ENCODE measurements at regions of chr1 and their contacts with region 1.

Region 1: GRCh38 chr1:1122078-1122811 is 6.4 kb upstream of the C1orf159 start:
- DNase-seq: peak in 1 of 2 experiments; percentile 73
- H3K4me3 ChIP-seq: no peak overlapping the region
- H3K4me3 Mint-ChIP-seq: no peak overlapping the region
- H3K27ac Mint-ChIP-seq: no peak overlapping the region
- H3K4me1 ChIP-seq: peaks cover 41% of the 10 kb centered on the region
- H3K4me1 Mint-ChIP-seq: peaks cover 16% of the 10 kb centered on the region
- H3K27me3 ChIP-seq: no peaks in the 10 kb centered on the region
- H3K27me3 Mint-ChIP-seq: no peaks in the 10 kb centered on the region
- CTCF ChIP-seq: peak; percentile 59 to 70

Region 2: DNA sequence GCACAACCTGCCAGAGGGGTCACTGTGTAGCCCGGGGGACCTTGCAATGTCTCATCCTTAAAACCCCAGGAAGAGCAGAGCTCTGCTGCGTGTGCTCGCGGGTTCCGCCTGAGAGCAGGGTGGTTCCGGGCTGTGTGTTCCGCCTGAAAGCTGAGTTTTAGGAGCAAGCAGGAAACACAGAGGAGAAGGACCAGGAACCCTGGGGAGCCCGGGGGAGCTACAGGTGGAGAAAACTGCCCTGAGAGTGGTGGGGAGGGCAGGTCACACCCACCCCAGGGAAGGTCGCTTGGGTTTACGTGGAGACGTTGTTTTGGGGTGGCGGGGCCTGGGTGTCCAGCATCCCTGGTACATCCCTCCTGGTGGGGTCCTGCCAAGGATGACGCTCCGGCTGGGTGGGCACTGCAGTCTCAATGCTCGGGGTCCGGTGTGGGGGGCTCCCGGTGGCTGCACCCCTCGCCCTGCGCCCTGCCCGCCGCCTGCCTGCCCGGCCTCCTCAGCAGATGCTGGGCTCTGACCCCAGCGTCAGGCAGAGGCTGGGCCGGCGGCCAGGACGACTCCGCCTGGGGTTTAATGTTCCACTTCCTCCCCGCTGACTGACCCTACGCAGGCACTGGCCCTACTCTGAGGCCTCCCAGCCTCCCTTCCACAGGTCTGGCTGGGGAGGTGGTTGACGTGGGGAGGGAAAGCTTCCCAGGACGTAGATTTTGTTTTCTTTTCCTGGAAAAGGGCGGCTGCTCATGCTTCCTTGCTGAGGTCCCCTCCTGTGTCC is 10.9 kb after region 1 on chr1:
- CTCF ChIA-PET with region 1: no interaction called
- POLR2A ChIA-PET with region 1: interaction called, 7 read pairs
- intact Hi-C with region 1: loop called (anchors 1 kb)
- DNase-seq: no peak
- H3K4me3 ChIP-seq: no peak overlapping the region
- H3K4me3 Mint-ChIP-seq: peak overlapping the region; percentile 27
- H3K27ac Mint-ChIP-seq: peak overlapping the region; percentile 34
- H3K4me1 ChIP-seq: peaks cover 16% of the 10 kb centered on the region
- H3K4me1 Mint-ChIP-seq: no peaks in the 10 kb centered on the region
- H3K27me3 ChIP-seq: no peaks in the 10 kb centered on the region
- H3K27me3 Mint-ChIP-seq: no peaks in the 10 kb centered on the region
- CTCF ChIP-seq: no peak

Region 3: DNA sequence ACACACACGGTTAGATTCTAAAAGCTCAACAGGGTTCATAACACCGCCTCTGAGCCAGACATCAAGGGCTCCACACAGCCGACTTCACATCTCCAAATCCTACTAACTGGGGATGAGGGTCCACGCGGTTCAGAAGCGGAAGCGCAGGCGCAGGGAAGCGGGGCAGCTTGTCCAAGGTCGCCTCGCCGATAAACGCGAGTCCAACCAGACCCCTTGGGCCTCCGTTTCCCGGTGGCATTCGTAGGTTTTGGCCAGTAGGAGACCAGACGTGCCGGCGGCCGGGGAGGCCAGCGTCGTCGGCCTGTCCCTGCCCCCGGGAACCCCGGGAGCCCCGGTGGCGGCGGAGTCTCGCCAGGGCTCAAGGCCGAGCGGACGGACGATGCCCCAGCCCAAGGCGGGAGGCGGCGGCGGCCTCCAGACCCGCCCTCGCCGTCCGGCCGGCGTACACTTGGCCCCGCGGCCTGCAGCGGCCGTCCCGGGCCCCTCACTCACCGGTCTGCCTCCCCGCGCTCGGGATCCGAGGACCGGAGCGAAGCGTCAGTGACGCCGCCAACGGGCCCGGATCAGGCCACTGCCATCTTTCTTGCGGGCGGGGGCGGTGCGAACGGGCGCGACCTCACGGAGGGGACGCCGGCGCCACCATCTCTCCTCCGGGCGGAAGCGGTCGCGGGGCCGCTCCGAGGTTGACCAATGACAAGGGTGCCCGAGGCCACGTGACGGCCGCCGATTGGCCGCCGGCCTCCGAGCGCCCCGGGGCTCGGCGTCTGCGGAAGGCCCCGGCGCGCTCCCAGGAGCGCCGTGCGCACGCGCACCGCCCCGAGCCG is 109.4 kb after region 1 on chr1 and contains the start of gene SDF4:
- CTCF ChIA-PET with region 1: interaction called, 8 read pairs
- POLR2A ChIA-PET with region 1: interaction called, 6 read pairs
- intact Hi-C with region 1: loop called (anchors 2 kb)
- DNase-seq: peak; percentile 93 to 94
- H3K4me3 ChIP-seq: peak within 1 kb of the TSS; percentile 70
- H3K4me3 Mint-ChIP-seq: peak within 1 kb of the TSS; percentile 85
- H3K27ac Mint-ChIP-seq: peak within 1 kb of the TSS; percentile 83
- H3K4me1 ChIP-seq: peaks cover 9% of the 10 kb centered on the region
- H3K4me1 Mint-ChIP-seq: peaks cover 6% of the 10 kb centered on the region
- H3K27me3 ChIP-seq: no peaks in the 10 kb centered on the region
- H3K27me3 Mint-ChIP-seq: no peaks in the 10 kb centered on the region
- CTCF ChIP-seq: no peak
- total RNA-seq, gene SDF4: 138 and 140 TPM in 2 replicates